A549 (cell line): ENCODE measurements at regions of chr7 and their contacts with region 1.

Region 1: GRCh38 chr7:47266131-47266706 is 315.7 kb downstream of the TNS3 start:
- DNase-seq: peak; percentile 66 to 70
- ATAC-seq: peak; percentile 60 to 81; a peak in 5 of 6 replicates
- H3K4me3 ChIP-seq: no peak overlapping the region
- H3K27ac ChIP-seq: peak overlapping the region in 1 of 2 experiments; percentile 45; a peak in 3 of 6 replicates
- H3K4me1 ChIP-seq: peaks cover 10% of the 10 kb centered on the region
- CTCF ChIP-seq: peak; percentile 93
- EP300 ChIP-seq: no peak
- POLR2A ChIP-seq: no peak
- RAD21 ChIP-seq: peak; percentile 95 to 96

Region 2: DNA sequence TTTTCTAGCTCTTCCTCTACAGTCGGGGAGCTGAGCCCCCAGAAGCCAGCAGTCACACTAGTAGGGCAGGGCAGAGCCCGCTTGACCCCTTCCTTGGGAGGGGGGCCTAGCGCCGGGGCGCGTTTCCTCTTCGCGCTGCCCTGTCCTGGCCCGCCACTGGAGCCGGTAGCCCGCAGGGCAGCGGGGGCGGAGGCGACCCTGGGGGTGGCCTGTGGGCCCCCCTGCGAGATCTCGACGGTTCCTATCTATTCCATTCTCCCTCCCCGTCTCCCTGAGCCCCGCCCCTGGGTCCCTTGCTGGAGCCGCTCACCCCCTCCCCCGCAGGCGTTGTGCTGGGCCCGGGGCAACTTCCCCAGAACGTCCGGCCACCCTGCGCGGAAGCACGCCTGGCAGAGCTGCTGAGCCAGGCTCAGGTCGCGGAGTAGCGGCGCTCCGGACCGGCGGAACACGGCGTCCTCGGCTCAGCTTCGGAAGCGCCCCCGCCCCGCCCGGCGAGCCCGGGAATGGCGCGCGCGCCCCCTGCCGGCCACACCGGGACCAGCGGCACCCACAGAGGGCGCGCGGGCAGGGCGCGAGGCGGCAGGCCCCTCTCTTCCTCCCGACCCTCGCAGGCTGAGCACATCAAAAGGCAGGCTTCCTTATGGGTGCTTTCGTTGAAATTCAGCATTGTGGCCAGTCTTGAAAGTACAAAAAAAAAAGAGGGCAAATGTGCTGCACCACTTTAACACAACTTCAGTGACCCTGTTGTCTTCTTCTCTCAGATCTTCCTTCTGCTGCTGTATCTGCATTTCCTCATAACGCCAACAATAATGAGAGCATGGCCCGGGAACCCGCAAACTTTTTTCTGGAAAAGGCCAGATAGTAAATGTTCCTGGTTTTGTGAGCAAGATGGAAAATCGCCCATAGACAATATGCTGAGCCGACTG is 11.9 kb before region 1 on chr7:
- CTCF ChIA-PET with region 1: interaction called, 69 read pairs
- POLR2A ChIA-PET with region 1: no interaction called
- DNase-seq: peak; percentile 59 to 74
- ATAC-seq: peak; percentile 81 to 93
- H3K4me3 ChIP-seq: peak overlapping the region; percentile 61
- H3K27ac ChIP-seq: peak overlapping the region; percentile 80 to 91
- H3K4me1 ChIP-seq: peaks cover 13% of the 10 kb centered on the region
- CTCF ChIP-seq: peak; percentile 97
- EP300 ChIP-seq: no peak
- POLR2A ChIP-seq: peak; percentile 41
- RAD21 ChIP-seq: peak; percentile 60 to 87

Region 3: DNA sequence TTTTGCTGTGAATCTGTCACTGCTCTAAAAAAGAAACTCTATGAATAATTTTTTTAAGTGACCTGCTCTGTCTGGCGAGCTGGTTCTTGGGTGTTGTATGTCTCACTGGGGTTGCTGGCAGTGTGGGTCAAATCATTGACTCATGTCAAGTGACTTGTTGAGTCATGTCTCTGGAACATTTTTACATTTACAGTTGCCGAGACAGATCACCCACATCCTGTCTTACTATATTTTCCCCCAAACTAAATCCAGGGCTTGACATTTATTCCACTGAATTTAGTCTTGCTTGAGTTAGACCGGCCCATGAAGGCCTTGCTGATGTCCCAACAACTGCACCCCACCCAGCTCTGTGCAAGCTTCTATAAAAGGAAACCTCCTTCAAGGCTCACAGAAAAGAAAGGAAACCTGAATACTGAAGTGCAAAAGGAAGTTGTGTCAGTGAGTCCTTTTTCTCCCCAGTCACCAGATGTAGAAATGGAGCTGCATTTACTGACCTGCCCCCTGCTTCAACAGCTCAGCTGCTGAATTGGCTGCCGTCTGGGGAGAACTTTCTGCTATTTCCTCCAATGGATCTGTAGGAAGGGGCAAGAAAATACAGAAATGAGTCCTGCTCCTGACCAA is 25.4 kb after region 1 on chr7:
- CTCF ChIA-PET with region 1: interaction called, 21 read pairs
- POLR2A ChIA-PET with region 1: no interaction called
- DNase-seq: peak; percentile 43 to 56
- ATAC-seq: peak; percentile 67 to 76
- H3K4me3 ChIP-seq: no peak overlapping the region
- H3K27ac ChIP-seq: peak overlapping the region; percentile 61 to 77
- H3K4me1 ChIP-seq: peaks cover 47% of the 10 kb centered on the region
- CTCF ChIP-seq: no peak
- EP300 ChIP-seq: 0 out of 5 replicates have a peak, but pooled peaks of 1 of the 2 experiments have one; percentile 19
- POLR2A ChIP-seq: no peak
- RAD21 ChIP-seq: no peak

Region 4: DNA sequence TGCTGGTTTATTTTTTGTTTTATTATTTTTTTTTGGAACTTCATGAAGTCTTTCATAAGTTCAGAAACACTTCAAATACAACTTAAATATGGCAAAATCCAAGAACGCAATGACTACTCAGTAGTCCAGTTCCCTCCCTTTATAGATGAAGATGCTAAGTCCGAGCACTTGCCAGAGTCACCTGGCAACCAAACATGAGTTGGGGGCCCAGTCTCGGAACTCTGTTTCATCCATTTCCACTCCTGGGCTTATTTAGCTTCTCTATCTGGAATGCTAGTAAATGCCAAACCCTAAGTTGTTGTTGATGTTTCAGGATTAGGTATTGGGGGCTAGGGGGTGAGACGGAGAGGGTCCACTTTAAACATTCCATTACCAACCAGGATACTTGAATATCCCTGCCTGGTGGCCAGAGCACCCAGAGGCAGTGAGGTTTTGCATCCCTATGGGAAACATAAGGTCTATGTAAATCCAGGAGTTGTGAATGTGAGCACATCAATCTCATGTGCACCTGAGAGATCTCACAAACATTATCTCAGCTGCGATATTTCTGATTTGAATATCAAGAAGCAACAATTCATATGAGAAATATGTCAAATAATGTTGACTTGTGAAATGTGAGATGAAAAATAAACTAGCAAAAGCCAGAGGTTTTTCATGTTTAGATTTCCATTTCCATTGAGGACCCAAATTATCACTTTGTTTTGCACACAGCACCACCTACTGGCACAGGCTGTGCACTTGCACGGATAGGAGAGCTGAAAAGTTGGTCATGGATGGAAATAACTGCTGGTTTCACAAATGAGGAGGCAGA is 552.8 kb after region 1 on chr7:
- CTCF ChIA-PET with region 1: interaction called, 34 read pairs
- POLR2A ChIA-PET with region 1: no interaction called
- DNase-seq: peak; percentile 72 to 82
- ATAC-seq: peak; percentile 87 to 88; a peak in 5 of 6 replicates
- H3K4me3 ChIP-seq: no peak overlapping the region
- H3K27ac ChIP-seq: peak overlapping the region; percentile 79 to 90
- H3K4me1 ChIP-seq: peaks cover 48% of the 10 kb centered on the region
- CTCF ChIP-seq: peak; percentile 97
- EP300 ChIP-seq: no peak; a peak in 1 of 5 replicates
- POLR2A ChIP-seq: no peak
- RAD21 ChIP-seq: peak; percentile 99

Region 5: DNA sequence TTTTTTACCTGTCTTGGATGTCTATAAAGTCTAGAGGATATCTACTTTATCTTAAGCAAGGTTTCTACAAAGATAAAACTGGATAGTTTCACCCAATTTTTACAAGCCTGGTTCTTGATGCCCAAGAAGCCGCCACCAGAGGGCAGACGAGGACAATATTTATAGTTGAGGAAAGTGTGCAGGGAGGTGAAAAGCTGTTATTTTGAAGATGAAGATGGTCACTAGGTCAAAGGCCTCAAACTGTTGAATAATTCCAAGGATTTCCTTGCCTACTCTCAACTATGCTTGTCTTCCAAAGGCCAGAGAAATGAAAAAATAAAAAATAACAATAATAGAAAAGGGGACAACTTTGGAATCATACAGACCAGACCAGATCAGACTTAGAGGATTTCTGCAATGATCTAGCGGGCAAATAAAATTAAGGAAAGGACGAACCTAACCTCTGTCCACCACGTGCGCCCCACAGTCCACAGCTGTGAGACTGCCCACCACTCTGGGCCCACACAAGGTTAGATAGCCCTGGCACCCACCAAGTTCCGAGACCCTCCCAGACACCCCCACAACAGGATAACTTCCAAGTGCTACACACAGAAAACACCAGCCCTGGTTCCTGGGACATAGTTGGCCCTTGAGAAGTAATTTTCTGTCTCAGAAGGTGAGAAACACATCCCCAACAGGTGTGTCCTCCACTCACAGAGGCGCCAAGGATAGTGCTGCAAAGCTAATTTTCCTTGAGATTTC is 679.2 kb after region 1 on chr7:
- CTCF ChIA-PET with region 1: interaction called, 36 read pairs
- POLR2A ChIA-PET with region 1: no interaction called
- DNase-seq: peak; percentile 62 to 71
- ATAC-seq: peak; percentile 70 to 82; a peak in 5 of 6 replicates
- H3K4me3 ChIP-seq: no peak overlapping the region
- H3K27ac ChIP-seq: no peak overlapping the region
- H3K4me1 ChIP-seq: peaks cover 13% of the 10 kb centered on the region
- CTCF ChIP-seq: peak; percentile 91
- EP300 ChIP-seq: no peak
- POLR2A ChIP-seq: no peak
- RAD21 ChIP-seq: peak; percentile 86 to 88

Region 6: DNA sequence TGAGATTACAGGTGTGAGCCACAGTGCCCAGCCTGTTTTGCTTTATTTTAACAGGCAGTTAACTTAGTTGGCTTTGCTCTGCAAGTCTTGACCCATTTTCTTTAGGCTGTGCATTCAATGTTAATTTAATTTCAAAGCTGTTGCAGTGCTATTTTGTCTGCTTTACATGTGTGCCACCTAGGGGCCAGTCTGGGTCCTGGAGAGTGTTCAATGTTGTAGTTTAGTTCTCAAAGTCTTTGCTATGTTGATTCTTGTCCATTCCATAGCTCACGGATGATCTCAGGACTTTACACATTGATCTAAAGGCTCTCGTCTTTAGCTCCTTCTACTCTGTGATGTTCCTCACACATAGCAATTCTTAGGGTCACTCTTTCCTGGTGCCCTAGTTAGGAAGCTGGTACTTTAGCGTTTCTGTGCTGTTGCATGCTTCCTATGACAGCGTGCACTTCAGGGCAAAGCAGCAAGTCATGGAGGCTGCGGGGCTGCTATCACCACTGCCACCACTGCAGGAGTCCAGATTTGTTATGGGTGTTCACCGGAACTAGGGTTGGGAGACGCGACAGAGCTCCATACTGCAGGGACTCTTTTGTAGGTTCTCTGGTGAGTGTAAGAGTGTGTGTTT is 888.7 kb after region 1 on chr7:
- CTCF ChIA-PET with region 1: interaction called, 10 read pairs
- POLR2A ChIA-PET with region 1: no interaction called
- DNase-seq: peak; percentile 48 to 66
- ATAC-seq: peak; percentile 90 to 97
- H3K4me3 ChIP-seq: no peak overlapping the region
- H3K27ac ChIP-seq: no peak overlapping the region
- H3K4me1 ChIP-seq: peaks cover 4% of the 10 kb centered on the region; the same call in 1 of the 3 replicates
- CTCF ChIP-seq: peak; percentile 79
- EP300 ChIP-seq: no peak
- POLR2A ChIP-seq: no peak
- RAD21 ChIP-seq: peak; percentile 87 to 94